PC-3 (cell line): ENCODE measurements at regions of chr5 and their contacts with region 1.

Region 1: DNA sequence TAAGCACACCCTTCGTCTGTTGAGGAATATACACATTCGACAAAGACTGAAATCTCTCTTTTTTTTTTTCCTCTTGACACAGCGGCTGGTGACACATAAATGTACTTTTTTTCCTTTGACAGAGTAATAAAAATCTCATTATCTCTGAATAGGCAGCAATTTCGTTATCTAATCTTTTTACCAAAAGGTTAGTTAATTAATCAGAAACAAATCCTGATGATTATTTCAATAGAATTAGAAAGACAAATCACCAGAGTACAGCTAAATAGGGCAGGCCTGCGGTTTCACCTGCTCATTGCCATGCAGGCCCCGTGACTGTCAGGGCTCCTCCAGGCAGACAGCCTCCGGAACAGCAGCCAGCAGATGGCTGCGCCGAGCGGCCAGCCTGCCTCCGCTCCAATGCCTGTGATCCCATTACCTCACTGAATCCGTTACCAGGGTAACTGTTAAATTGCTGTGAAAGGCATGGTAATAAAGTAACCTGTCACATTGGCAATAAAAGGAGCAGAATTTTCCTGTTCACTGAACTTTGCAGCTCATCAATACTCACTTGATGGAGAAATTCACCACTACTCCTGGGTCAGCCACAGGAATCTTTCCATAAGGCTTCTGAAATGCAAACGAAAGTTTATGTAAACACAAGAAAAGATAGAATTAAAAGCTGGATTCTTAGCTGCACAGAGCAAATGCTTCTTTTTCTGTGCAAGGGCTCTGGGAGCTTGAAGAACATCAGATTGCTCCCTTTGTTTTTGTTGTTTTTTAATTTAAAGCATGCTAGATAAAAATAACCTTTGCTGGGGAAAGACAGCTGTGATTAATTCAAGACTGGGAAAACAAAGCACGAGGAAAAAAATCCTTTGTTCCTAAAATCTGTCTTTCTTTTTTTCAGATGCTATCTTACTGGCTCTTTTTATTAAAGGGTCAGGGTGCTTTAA is 666.4 kb upstream of the ZNF608 start:
- DNase-seq: peak; percentile 56
- ATAC-seq: peak; percentile 51
- H3K4me3 ChIP-seq: peak overlapping the region; percentile 30; the same call in 1 of the 2 replicates
- H3K27ac ChIP-seq: 0 out of 2 replicates have a peak overlapping the region, but pooled peaks have one; percentile 5
- H3K4me1 ChIP-seq: peaks cover 53% of the 10 kb centered on the region
- H3K27me3 ChIP-seq: no peaks in the 10 kb centered on the region
- CTCF ChIP-seq: peak; percentile 50

Region 2: GRCh38 chr5:124902097-124902821 is 510.6 kb before region 1 on chr5:
- CTCF ChIA-PET with region 1: no interaction called
- POLR2A ChIA-PET with region 1: no interaction called
- intact Hi-C with region 1: loop called (anchors 10 kb)
- DNase-seq: no peak
- ATAC-seq: no peak
- H3K4me3 ChIP-seq: no peak overlapping the region
- H3K27ac ChIP-seq: no peak overlapping the region
- H3K4me1 ChIP-seq: peaks cover 6% of the 10 kb centered on the region
- H3K27me3 ChIP-seq: no peaks in the 10 kb centered on the region
- CTCF ChIP-seq: no peak

Region 3: GRCh38 chr5:125054106-125054505 is 358.7 kb before region 1 on chr5:
- CTCF ChIA-PET with region 1: no interaction called
- POLR2A ChIA-PET with region 1: no interaction called
- intact Hi-C with region 1: loop called (anchors 2 kb)
- DNase-seq: peak; percentile 80
- ATAC-seq: peak; percentile 84
- H3K4me3 ChIP-seq: no peak overlapping the region
- H3K27ac ChIP-seq: peak overlapping the region; percentile 3; the same call in 1 of the 2 replicates
- H3K4me1 ChIP-seq: peaks cover 26% of the 10 kb centered on the region
- H3K27me3 ChIP-seq: no peaks in the 10 kb centered on the region
- CTCF ChIP-seq: no peak

Region 4: DNA sequence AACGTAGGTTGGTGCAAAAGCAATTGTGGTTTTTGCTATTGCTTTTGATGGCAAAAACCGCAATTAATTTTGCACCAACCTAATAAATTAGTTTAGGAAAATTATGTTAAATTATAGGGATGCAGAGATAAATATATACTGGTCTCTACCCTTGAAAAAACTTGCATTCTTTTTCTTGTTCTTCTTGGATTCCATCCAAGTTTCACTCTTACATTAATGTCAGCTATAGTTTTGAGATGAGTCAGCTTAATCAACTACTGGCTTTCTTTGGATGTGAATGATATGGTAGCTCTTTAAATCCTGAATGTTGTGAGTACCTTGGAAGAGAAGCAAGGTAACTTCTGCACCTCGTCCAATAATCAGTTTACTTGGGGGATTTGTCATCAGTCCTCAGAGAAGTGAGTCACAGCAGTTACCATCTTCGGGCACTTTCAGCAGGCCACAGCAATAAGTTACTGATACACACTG is 117.4 kb before region 1 on chr5:
- CTCF ChIA-PET with region 1: interaction called, 3 read pairs
- POLR2A ChIA-PET with region 1: no interaction called
- intact Hi-C with region 1: loop called (anchors 5 kb)
- DNase-seq: peak; percentile 85
- ATAC-seq: peak; percentile 87
- H3K4me3 ChIP-seq: no peak overlapping the region
- H3K27ac ChIP-seq: peak overlapping the region; percentile 66
- H3K4me1 ChIP-seq: peaks cover 37% of the 10 kb centered on the region
- H3K27me3 ChIP-seq: no peaks in the 10 kb centered on the region
- CTCF ChIP-seq: no peak

Region 5: GRCh38 chr5:125484742-125485641 is 72.2 kb after region 1 on chr5:
- CTCF ChIA-PET with region 1: no interaction called
- POLR2A ChIA-PET with region 1: no interaction called
- intact Hi-C with region 1: loop called (anchors 1 kb)
- DNase-seq: peak; percentile 87
- ATAC-seq: peak; percentile 90
- H3K4me3 ChIP-seq: peak overlapping the region; percentile 58
- H3K27ac ChIP-seq: peak overlapping the region; percentile 93
- H3K4me1 ChIP-seq: peaks cover 32% of the 10 kb centered on the region
- H3K27me3 ChIP-seq: no peaks in the 10 kb centered on the region
- CTCF ChIP-seq: no peak

Region 6: GRCh38 chr5:126339215-126339805 is 926.5 kb after region 1 on chr5:
- CTCF ChIA-PET with region 1: no interaction called
- POLR2A ChIA-PET with region 1: no interaction called
- intact Hi-C with region 1: loop called (anchors 5 kb)
- DNase-seq: peak; percentile 82
- ATAC-seq: peak; percentile 48
- H3K4me3 ChIP-seq: no peak overlapping the region
- H3K27ac ChIP-seq: no peak overlapping the region
- H3K4me1 ChIP-seq: peaks cover 34% of the 10 kb centered on the region
- H3K27me3 ChIP-seq: no peaks in the 10 kb centered on the region
- CTCF ChIP-seq: peak; percentile 88